ENCODE measurements at regions of chr11 and their contacts with region 1.

Region 1: DNA sequence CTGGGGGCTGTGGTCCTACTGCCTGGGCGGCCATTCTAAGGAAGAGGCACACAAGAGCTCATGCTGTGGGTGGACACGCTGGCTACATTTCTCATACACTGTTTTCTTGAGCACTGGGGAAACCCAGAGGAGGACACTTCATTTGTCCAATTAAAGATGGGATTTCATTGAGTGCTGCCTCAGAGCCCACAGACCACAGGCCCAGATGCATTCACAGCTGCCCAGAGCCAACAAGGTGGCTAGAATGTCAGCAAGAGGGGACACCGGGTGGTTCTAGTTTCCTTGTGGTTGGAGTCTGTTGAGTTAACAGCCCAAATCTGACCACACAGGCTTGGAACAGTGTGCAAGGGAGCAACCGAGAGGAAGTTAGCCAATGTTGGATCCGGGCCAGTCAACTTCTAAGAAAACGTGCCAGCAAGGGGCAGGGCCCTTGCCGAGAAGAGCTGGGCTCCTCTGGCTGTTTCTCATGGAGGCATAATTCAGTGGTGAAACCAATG is 35.0 kb upstream of the SORL1 start:
- H3K4me3 Mint-ChIP-seq: peak overlapping the region; percentile 2
- H3K27ac Mint-ChIP-seq: peak overlapping the region; percentile 93
- H3K4me1 Mint-ChIP-seq: peaks cover 78% of the 10 kb centered on the region
- H3K27me3 Mint-ChIP-seq: no peaks in the 10 kb centered on the region

Region 2: GRCh38 chr11:121328967-121329679 is 88.0 kb before region 1 on chr11:
- intact Hi-C with region 1: loop called (anchors 5 kb)
- H3K4me3 Mint-ChIP-seq: no peak overlapping the region
- H3K27ac Mint-ChIP-seq: no peak overlapping the region
- H3K4me1 Mint-ChIP-seq: peaks cover 6% of the 10 kb centered on the region
- H3K27me3 Mint-ChIP-seq: no peaks in the 10 kb centered on the region

Region 3: GRCh38 chr11:121372671-121373429 is 44.3 kb before region 1 on chr11:
- intact Hi-C with region 1: loop called (anchors 5 kb)
- H3K4me3 Mint-ChIP-seq: no peak overlapping the region
- H3K27ac Mint-ChIP-seq: peak overlapping the region; percentile 16
- H3K4me1 Mint-ChIP-seq: peaks cover 70% of the 10 kb centered on the region
- H3K27me3 Mint-ChIP-seq: no peaks in the 10 kb centered on the region

Region 4: DNA sequence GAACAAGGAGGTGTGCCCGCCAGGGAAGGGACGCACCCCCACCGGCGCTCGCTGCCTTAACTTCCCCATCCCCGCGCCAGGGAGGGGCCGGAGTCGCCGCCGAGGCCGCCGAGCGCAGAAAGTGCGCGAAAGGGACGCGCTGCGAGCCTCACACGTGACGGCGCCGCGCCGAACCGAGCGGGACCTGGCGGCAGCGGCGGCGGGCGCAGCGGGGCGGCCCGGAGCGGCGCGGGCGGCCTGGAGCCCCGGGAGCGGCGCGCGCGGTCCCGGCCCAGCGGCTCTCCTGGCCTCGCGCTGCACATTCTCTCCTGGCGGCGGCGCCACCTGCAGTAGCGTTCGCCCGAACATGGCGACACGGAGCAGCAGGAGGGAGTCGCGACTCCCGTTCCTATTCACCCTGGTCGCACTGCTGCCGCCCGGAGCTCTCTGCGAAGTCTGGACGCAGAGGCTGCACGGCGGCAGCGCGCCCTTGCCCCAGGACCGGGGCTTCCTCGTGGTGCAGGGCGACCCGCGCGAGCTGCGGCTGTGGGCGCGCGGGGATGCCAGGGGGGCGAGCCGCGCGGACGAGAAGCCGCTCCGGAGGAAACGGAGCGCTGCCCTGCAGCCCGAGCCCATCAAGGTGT is 35.0 kb after region 1 on chr11 and contains the start of gene SORL1:
- intact Hi-C with region 1: loop called (anchors 5 kb)
- H3K4me3 Mint-ChIP-seq: peak within 1 kb of the TSS; percentile 80
- H3K27ac Mint-ChIP-seq: peak within 1 kb of the TSS; percentile 81
- H3K4me1 Mint-ChIP-seq: peaks cover 92% of the 10 kb centered on the region
- H3K27me3 Mint-ChIP-seq: no peaks in the 10 kb centered on the region

Region 5: DNA sequence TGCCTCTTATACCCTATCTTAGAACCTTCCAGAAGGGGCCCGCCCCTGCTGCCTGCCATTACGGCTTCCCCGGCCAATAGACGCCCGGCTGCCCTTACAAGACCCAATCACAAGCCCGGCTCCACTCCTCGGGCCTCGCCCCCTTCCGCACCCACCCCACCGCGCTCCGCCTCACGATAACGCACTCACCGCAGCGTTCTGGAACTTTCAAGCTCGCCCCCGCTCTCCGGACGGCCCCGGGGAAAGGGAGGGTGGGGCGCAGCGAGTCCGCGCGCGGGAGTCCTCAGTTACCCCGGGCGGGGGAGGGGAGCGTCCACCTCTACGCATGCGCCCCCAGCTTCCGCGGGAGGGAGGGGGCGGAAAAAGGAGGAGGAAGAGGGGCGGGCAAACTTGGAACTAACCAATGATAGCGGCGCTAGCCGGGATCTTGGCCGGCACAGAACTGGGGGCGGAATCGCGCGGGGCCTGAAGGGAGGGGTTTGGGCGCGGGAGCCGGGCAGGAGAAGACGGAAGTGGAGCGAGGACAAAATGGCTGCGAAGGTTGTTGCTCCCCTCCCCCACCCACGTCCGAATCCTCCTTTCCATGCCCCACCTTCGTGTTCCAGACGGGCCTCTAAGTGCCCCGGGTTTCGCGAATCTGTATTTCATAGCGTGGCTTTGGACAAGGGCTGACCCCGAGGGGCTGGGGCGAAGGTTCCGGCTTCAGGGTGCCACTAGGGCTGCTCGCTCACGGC is 1645.2 kb after region 1 on chr11:
- intact Hi-C with region 1: loop called (anchors 5 kb)
- H3K4me3 Mint-ChIP-seq: peak overlapping the region; percentile 95
- H3K27ac Mint-ChIP-seq: peak overlapping the region; percentile 99
- H3K4me1 Mint-ChIP-seq: peaks cover 38% of the 10 kb centered on the region
- H3K27me3 Mint-ChIP-seq: no peaks in the 10 kb centered on the region